Endothelial cell of umbilical vein (primary cell): ENCODE measurements at regions of chr17 and their contacts with region 1.

Region 1: GRCh38 chr17:48892940-48893645 is 506 bp downstream of the ATP5MC1 start:
- DNase-seq: no peak
- H3K4me3 ChIP-seq: peak overlapping the region; percentile 3 to 79 (median 61)
- H3K27ac ChIP-seq: peak overlapping the region; percentile 44
- H3K4me1 ChIP-seq: peaks cover 11% of the 10 kb centered on the region
- H3K27me3 ChIP-seq: no peaks in the 10 kb centered on the region
- CTCF ChIP-seq: no peak
- POLR2A ChIP-seq: peak; percentile 48

Region 2: GRCh38 chr17:48908047-48908843 is 15.2 kb after region 1 on chr17 and contains the start of gene UBE2Z:
- CTCF ChIA-PET with region 1: interaction called, 4 read pairs
- POLR2A ChIA-PET with region 1: interaction called, 20 read pairs
- dilution Hi-C with region 1: no loop called
- intact Hi-C with region 1: loop called (anchors 1 kb)
- DNase-seq: peak; percentile 96
- H3K4me3 ChIP-seq: peak within 1 kb of the TSS; percentile 50 to 84 (median 68)
- H3K27ac ChIP-seq: peak within 1 kb of the TSS; percentile 89
- H3K4me1 ChIP-seq: peaks cover 27% of the 10 kb centered on the region
- H3K27me3 ChIP-seq: no peaks in the 10 kb centered on the region
- CTCF ChIP-seq: peak in 1 of 2 donors; percentile 8
- POLR2A ChIP-seq: peak; percentile 82
- total RNA-seq, gene UBE2Z: 95.1 and 104 TPM in 2 replicates

Region 3: DNA sequence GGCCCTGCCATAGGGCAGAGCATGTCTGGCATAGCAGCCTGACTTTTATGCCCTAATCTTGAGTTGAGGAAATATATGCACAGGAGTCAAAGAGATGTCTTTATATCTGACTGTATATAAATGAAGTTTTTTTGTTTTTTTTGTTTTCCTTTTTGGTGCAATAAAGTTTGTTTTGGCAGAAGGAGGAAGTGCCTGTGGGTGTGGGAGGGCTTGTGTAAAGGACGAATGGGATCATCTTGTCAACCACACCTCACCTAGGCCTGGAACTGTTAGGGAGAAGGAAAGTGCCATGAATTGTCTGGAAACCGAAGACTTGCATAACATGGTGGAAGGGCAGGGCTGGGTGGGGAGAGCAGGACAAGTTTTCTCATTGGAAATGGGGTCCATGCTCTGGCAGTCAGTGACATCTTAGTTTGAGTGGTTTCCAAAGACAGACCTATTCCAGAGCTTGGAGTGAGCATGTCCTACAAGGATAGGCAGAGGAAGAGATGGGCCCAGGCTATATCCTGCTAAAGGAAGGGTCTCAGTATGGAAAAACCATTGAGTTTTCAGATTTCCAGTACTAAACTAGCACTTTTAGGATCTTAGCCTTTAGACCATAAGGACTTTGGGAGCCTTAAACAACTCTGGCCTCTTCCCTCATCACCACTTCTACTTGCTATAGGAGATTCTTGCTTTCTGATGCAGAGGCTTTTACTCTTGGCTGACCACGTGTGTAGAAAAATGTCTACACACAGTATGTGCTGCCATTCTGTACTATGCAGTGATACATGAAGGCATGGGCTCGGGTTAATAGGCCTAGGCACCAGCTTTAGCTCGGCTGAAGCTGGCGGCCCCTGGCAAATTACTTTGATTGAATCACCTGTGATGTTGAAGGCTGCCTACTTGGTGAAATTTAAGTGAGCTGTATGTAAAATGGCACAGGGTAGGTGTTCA is 36.1 kb after region 1 on chr17:
- CTCF ChIA-PET with region 1: no interaction called
- POLR2A ChIA-PET with region 1: no interaction called
- dilution Hi-C with region 1: no loop called
- intact Hi-C with region 1: no loop called
- DNase-seq: no peak
- H3K4me3 ChIP-seq: no peak overlapping the region
- H3K27ac ChIP-seq: no peak overlapping the region
- H3K4me1 ChIP-seq: peaks cover 3% of the 10 kb centered on the region
- H3K27me3 ChIP-seq: no peaks in the 10 kb centered on the region
- CTCF ChIP-seq: no peak
- POLR2A ChIP-seq: peak; percentile 36

Region 4: GRCh38 chr17:48970224-48970623 is 77.1 kb after region 1 on chr17:
- CTCF ChIA-PET with region 1: no interaction called
- POLR2A ChIA-PET with region 1: no interaction called
- dilution Hi-C with region 1: no loop called
- intact Hi-C with region 1: loop called (anchors 1 kb)
- DNase-seq: peak; percentile 29
- H3K4me3 ChIP-seq: no peak overlapping the region
- H3K27ac ChIP-seq: no peak overlapping the region
- H3K4me1 ChIP-seq: peaks cover 15% of the 10 kb centered on the region
- H3K27me3 ChIP-seq: no peaks in the 10 kb centered on the region
- CTCF ChIP-seq: no peak
- POLR2A ChIP-seq: no peak

Region 5: GRCh38 chr17:49090950-49091594 is 198.0 kb after region 1 on chr17:
- CTCF ChIA-PET with region 1: no interaction called
- POLR2A ChIA-PET with region 1: no interaction called
- dilution Hi-C with region 1: no loop called
- intact Hi-C with region 1: no loop called
- DNase-seq: no peak
- H3K4me3 ChIP-seq: no peak overlapping the region
- H3K27ac ChIP-seq: no peak overlapping the region
- H3K4me1 ChIP-seq: no peaks in the 10 kb centered on the region
- H3K27me3 ChIP-seq: no peaks in the 10 kb centered on the region
- CTCF ChIP-seq: no peak
- POLR2A ChIP-seq: no peak